H1 (cell line): ENCODE measurements at regions of chr3 and their contacts with region 1.

Region 1: DNA sequence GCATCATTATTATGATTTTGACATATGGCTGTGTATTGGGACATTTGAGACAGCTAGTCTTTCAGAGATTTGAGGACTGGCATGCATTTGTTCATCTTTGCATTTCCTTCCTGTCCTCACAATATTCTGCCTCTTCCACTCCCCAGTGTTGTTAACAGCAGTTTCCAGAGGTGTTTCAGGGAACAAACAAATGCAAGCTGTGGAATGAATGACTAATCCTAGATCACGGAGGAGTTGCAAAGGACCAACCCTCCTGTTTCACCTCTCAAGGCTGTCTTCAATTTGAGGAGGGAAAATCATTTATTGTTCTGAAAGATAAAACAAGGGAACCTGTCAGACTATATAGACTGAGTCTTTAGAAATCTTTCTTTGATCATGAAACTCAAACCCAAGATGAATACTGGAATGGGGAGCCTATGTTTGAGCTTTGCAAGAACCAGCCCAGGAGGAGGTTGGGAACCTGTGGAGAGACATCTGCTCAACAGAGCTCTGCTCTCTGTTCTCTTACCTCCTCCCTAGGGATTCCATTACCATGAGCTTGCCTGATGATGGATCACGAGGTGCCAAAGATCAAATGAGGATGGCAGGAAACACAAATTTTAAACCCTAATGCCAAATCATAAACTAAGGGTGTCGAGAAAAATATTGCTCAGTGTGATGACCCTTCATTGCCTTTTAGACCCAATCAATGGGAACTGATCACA is 68.5 kb downstream of the SLC7A14 start:
- DNase-seq: no peak
- H3K4me3 ChIP-seq: no peak overlapping the region
- H3K27ac ChIP-seq: no peak overlapping the region
- H3K4me1 ChIP-seq: no peaks in the 10 kb centered on the region
- H3K27me3 ChIP-seq: no peaks in the 10 kb centered on the region
- CTCF ChIP-seq: no peak
- EP300 ChIP-seq: no peak
- POLR2A ChIP-seq: no peak
- RAD21 ChIP-seq: no peak

Region 2: DNA sequence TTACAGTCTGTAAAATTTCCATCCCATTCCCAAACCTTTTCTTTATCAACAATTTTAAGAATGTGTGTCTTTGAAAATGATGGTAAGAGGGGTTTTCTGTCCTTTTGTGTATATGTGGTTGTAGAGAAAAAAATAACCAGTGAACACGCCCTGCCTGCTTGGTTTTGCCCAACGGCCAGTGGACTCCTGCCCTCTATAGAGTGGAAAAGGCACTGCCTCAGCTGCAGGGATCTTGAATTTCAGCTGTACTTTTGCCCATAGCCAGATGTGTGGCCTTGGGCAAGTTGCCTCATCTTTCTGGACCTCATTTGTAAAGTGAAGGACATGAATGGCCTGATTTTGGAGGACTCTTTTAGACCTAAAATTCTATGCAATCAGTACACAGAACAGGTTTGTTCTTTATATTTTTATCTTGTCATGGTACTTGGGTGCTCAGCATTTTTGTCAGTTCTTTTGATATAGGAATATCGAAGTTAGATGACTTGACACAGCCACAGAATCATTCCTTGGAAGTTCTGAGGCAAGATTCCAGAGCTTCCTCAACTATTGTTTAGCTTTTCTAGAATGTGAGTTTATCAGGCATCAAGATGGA is 17.7 kb before region 1 on chr3:
- CTCF ChIA-PET with region 1: interaction called, 47 read pairs
- POLR2A ChIA-PET with region 1: no interaction called
- DNase-seq: no peak
- H3K4me3 ChIP-seq: no peak overlapping the region
- H3K27ac ChIP-seq: no peak overlapping the region
- H3K4me1 ChIP-seq: no peaks in the 10 kb centered on the region
- H3K27me3 ChIP-seq: no peaks in the 10 kb centered on the region
- CTCF ChIP-seq: peak; percentile 72 to 83 (median 76)
- EP300 ChIP-seq: no peak
- POLR2A ChIP-seq: no peak
- RAD21 ChIP-seq: peak; percentile 77 to 81

Region 3: DNA sequence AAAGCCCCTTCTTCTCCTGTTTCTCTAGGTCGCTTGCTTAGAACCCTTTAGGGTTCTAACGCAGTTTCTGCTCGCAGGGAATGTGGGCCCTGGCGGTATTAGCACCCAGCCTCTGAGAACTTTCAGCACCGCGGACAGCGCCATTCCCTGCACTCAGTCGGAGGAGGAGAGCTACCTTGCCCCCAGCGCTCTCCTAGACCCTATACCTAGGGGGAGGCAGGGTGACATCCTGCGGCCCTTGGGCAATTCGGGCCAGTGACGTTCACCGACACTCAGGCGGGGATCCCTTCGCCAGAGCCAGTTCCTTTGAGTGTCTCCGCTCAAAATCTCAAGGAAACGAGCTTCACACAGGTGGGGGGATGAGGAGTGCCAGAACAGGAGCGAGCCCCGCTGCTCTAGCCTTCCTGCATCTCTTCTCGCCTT is 67.2 kb after region 1 on chr3:
- CTCF ChIA-PET with region 1: no interaction called
- POLR2A ChIA-PET with region 1: no interaction called
- DNase-seq: peak in 1 of 2 experiments; percentile 96
- H3K4me3 ChIP-seq: peak overlapping the region; percentile 32 to 71 (median 60)
- H3K27ac ChIP-seq: no peak overlapping the region
- H3K4me1 ChIP-seq: peaks cover 0 to 7% (median 3%) of the 10 kb centered on the region in 4 experiments; a peak in 4 of 7 replicates
- H3K27me3 ChIP-seq: peaks cover 0 to 25% (median 21%) of the 10 kb centered on the region in 4 experiments; a peak in 6 of 7 replicates
- CTCF ChIP-seq: peak in 2 of 3 experiments; percentile 3 to 7; a peak in 1 of 4 replicates
- EP300 ChIP-seq: no peak
- POLR2A ChIP-seq: no peak
- RAD21 ChIP-seq: peak; percentile 31 to 34

Region 4: GRCh38 chr3:170622369-170623159 is 105.2 kb after region 1 on chr3:
- CTCF ChIA-PET with region 1: no interaction called
- POLR2A ChIA-PET with region 1: no interaction called
- DNase-seq: no peak
- H3K4me3 ChIP-seq: no peak overlapping the region
- H3K27ac ChIP-seq: no peak overlapping the region
- H3K4me1 ChIP-seq: no peaks in the 10 kb centered on the region
- H3K27me3 ChIP-seq: no peaks in the 10 kb centered on the region
- CTCF ChIP-seq: no peak
- EP300 ChIP-seq: no peak
- POLR2A ChIP-seq: no peak
- RAD21 ChIP-seq: no peak